Dendritic cell treated with granulocyte-macrophage colony-stimulating factor and Interleukin-4, amounts not matched to agents 40 ng/mL and 50 ng/mL, for 4 days (primary cell): ENCODE measurements at regions of chr2 and their contacts with region 1.

Region 1: GRCh38 chr2:240704651-240705050 is 13.0 kb downstream of the AQP12A start:
- H3K4me3 Mint-ChIP-seq: no peak overlapping the region
- H3K27ac Mint-ChIP-seq: peak overlapping the region; percentile 66
- H3K4me1 Mint-ChIP-seq: peaks cover 19% of the 10 kb centered on the region
- H3K27me3 Mint-ChIP-seq: peaks cover 8% of the 10 kb centered on the region

Region 2: DNA sequence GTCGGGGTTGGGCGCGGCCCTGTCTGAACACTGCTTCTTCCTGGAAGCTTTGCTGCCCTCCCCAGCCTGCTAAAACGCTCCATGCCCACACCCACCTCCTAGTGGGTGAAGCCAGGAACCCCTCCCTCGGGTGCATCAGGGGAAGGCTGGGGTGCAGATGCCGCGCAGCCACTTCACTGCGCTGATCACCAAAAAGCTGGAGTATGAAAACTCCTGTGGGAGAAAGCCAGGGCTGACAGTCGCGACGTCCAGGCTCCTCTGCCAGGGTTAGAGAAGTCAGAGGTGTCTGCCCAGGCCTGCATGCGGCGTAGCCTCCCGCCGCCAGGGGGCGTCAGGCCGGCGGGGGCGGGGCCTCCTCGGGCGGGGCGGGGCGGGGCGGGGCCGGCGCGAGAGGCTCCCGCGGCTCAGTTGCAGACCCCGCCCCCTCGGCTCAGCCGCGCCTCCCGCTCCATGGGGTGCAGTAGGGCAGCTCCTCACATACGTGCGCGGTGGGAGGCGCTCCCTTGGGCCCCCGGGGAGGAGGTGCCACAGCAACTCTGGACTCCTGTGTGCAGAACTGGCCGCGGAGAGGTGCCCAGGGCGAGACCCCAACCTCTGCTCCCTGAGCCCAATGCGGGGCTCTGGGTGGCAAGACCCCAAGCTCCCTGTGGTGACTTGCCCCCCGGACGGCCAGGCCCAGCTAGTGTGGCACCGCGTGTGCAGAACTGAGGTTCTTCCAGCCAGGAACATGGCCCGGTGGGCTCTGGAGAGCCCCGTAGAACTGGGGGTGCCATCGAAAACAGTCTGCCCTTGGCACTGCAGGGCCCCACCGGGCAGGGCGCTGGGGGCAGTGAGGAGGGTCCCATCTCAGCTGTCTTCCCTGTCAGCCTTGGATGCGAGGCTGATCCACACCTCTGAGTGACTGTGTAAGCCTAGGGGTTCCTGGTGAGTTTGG is 138.2 kb before region 1 on chr2:
- intact Hi-C with region 1: no loop called
- H3K4me3 Mint-ChIP-seq: peak overlapping the region; percentile 82
- H3K27ac Mint-ChIP-seq: peak overlapping the region; percentile 88
- H3K4me1 Mint-ChIP-seq: peaks cover 86% of the 10 kb centered on the region
- H3K27me3 Mint-ChIP-seq: no peaks in the 10 kb centered on the region

Region 3: GRCh38 chr2:240595496-240596470 is 108.9 kb before region 1 on chr2:
- intact Hi-C with region 1: loop called (anchors 10 kb)
- H3K4me3 Mint-ChIP-seq: no peak overlapping the region
- H3K27ac Mint-ChIP-seq: no peak overlapping the region
- H3K4me1 Mint-ChIP-seq: peaks cover 14% of the 10 kb centered on the region
- H3K27me3 Mint-ChIP-seq: no peaks in the 10 kb centered on the region

Region 4: GRCh38 chr2:240733803-240734495 is 29.3 kb after region 1 on chr2:
- intact Hi-C with region 1: no loop called
- H3K4me3 Mint-ChIP-seq: no peak overlapping the region
- H3K27ac Mint-ChIP-seq: no peak overlapping the region
- H3K4me1 Mint-ChIP-seq: no peaks in the 10 kb centered on the region
- H3K27me3 Mint-ChIP-seq: peaks cover 4% of the 10 kb centered on the region